Activated T-helper 1 cell treated with anti-CD3 and anti-CD28 coated beads, Interleukin-12 subunit alpha, Interleukin-12 subunit beta, Interleukin-2, Interleukin-4 antibody, amounts not matched to agents 30 ng/mL and 10 ng/mL and 1 ng/mL, durations not matched to agents 14 hours and 24 hours and 36 hours (primary cell): ENCODE measurements at regions of chr10 and their contacts with region 1.

Region 1: GRCh38 chr10:68526626-68527307 is 556 bp downstream of the SLC25A16 start:
- DNase-seq: no peak
- H3K4me3 Mint-ChIP-seq: peak overlapping the region; percentile 93
- H3K27ac Mint-ChIP-seq: peak overlapping the region; percentile 84
- H3K4me1 Mint-ChIP-seq: peaks cover 7% of the 10 kb centered on the region
- H3K27me3 Mint-ChIP-seq: no peaks in the 10 kb centered on the region

Region 2: GRCh38 chr10:68406815-68407548 is 119.8 kb before region 1 on chr10 and contains the start of gene RUFY2:
- intact Hi-C with region 1: loop called (anchors 1 kb)
- DNase-seq: peak; percentile 77
- H3K4me3 Mint-ChIP-seq: peak within 1 kb of the TSS; percentile 90
- H3K27ac Mint-ChIP-seq: peak within 1 kb of the TSS; percentile 80
- H3K4me1 Mint-ChIP-seq: peaks cover 13% of the 10 kb centered on the region
- H3K27me3 Mint-ChIP-seq: no peaks in the 10 kb centered on the region
- total RNA-seq, gene RUFY2: 10.4 and 12.3 TPM in 2 replicates

Region 3: GRCh38 chr10:68471586-68472408 is 55.0 kb before region 1 on chr10 and contains the start of gene DNA2:
- intact Hi-C with region 1: loop called (anchors 1 kb)
- DNase-seq: peak; percentile 71
- H3K4me3 Mint-ChIP-seq: peak within 1 kb of the TSS; percentile 96
- H3K27ac Mint-ChIP-seq: peak within 1 kb of the TSS; percentile 95
- H3K4me1 Mint-ChIP-seq: peaks cover 25% of the 10 kb centered on the region
- H3K27me3 Mint-ChIP-seq: no peaks in the 10 kb centered on the region
- total RNA-seq, gene DNA2: 50.2 and 54.3 TPM in 2 replicates

Region 4: GRCh38 chr10:68600041-68600778 is 73.4 kb after region 1 on chr10:
- intact Hi-C with region 1: loop called (anchors 1 kb)
- DNase-seq: peak; percentile 35
- H3K4me3 Mint-ChIP-seq: peak overlapping the region; percentile 85
- H3K27ac Mint-ChIP-seq: peak overlapping the region; percentile 80
- H3K4me1 Mint-ChIP-seq: peaks cover 29% of the 10 kb centered on the region
- H3K27me3 Mint-ChIP-seq: no peaks in the 10 kb centered on the region

Region 5: GRCh38 chr10:68720793-68721672 is 194.3 kb after region 1 on chr10 and contains the start of gene CCAR1:
- intact Hi-C with region 1: loop called (anchors 1 kb)
- DNase-seq: peak; percentile 95
- H3K4me3 Mint-ChIP-seq: peak within 1 kb of the TSS; percentile 90
- H3K27ac Mint-ChIP-seq: peak within 1 kb of the TSS; percentile 98
- H3K4me1 Mint-ChIP-seq: peaks cover 14% of the 10 kb centered on the region
- H3K27me3 Mint-ChIP-seq: peaks cover 2% of the 10 kb centered on the region
- total RNA-seq, gene CCAR1: 102 and 106 TPM in 2 replicates

Region 6: GRCh38 chr10:68955832-68956532 is 429.2 kb after region 1 on chr10 and contains the start of gene DDX21:
- intact Hi-C with region 1: loop called (anchors 1 kb)
- DNase-seq: peak; percentile 87
- H3K4me3 Mint-ChIP-seq: peak within 1 kb of the TSS; percentile 99
- H3K27ac Mint-ChIP-seq: peak within 1 kb of the TSS; percentile 99
- H3K4me1 Mint-ChIP-seq: peaks cover 25% of the 10 kb centered on the region
- H3K27me3 Mint-ChIP-seq: no peaks in the 10 kb centered on the region
- total RNA-seq, gene DDX21: 267 and 278 TPM in 2 replicates